ENCODE measurements at regions of chr15 and their contacts with region 1.

Region 1: GRCh38 chr15:85689729-85690128 is 105.0 kb downstream of the KLHL25 start:
- DNase-seq: peak; percentile 47 to 85 (median 77)
- H3K4me3 ChIP-seq: peak overlapping the region; percentile 81
- H3K4me3 Mint-ChIP-seq: peak overlapping the region; percentile 94 to 99 (median 96)
- H3K27ac ChIP-seq: peak overlapping the region; percentile 88
- H3K27ac Mint-ChIP-seq: peak overlapping the region; percentile 90 to 100 (median 99)
- H3K4me1 ChIP-seq: peaks cover 57% of the 10 kb centered on the region
- H3K4me1 Mint-ChIP-seq: peaks cover 63 to 75% (median 73%) of the 10 kb centered on the region in 3 donors
- H3K27me3 ChIP-seq: no peaks in the 10 kb centered on the region
- H3K27me3 Mint-ChIP-seq: no peaks in the 10 kb centered on the region

Region 2: DNA sequence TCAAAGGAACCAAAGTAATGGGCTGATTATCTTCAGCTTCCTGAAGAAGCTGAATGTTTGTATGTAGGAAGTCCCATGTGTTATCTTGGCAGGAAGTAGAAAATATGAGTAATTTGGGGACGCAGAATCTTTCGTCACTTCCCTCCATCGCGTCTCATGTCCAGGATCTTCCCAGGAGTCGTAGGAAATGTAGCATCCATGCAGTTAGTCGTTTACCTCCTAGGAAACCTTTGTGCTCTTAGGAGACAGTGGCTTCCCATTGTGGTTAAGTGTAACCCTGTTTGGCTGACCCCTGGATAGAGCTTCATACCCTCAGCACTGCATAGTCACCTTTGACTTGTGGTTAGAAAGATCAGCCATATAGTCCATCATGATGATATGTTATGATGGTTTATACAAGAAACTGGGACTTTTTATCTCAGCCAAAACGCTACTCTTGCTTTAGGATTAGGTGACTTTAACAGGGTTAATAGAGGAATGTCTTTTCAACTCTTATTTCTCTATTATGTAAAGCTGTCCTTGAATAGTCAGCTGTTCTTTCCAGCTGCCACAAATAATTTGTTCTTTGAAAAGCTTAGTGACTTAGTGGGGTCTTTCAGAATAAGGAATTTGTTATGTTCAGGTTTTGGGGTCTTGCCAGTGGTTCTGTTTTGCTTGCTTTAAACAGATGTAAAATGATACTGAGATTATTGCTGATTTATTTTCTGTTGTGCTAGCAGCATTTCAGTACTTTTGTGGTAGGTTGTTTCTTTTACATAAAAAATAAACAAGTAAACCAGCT is 12.8 kb after region 1 on chr15:
- CTCF ChIA-PET with region 1: interaction called, 6 read pairs
- POLR2A ChIA-PET with region 1: interaction called, 62 read pairs
- DNase-seq: peak in 4 of 5 donors; percentile 18 to 56 (median 44)
- H3K4me3 ChIP-seq: peak overlapping the region; percentile 49
- H3K4me3 Mint-ChIP-seq: peak overlapping the region; percentile 72 to 93 (median 78)
- H3K27ac ChIP-seq: peak overlapping the region; percentile 85
- H3K27ac Mint-ChIP-seq: peak overlapping the region; percentile 95 to 99 (median 96)
- H3K4me1 ChIP-seq: peaks cover 76% of the 10 kb centered on the region
- H3K4me1 Mint-ChIP-seq: peaks cover 72 to 87% (median 84%) of the 10 kb centered on the region in 3 donors
- H3K27me3 ChIP-seq: no peaks in the 10 kb centered on the region
- H3K27me3 Mint-ChIP-seq: no peaks in the 10 kb centered on the region